ENCODE measurements at regions of chr9 and their contacts with region 1.

Region 1: DNA sequence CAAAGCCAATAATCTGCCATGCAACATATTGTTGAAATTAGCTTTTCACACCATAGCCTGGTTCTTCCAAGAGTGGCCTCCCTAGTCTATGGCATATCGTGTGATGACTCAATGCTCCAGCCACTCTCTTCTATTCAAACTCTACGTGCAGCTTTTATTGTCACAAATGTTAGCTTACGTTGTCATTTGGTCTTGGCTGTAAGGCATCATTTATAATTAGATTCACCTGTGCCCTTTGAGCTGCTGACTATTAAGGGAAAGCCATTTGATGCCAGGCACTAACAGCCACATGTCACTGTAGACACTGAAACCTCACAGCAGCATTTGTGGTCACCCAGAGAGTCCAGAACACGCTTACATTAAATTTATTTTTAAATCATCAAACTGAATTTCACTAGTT is 66.8 kb downstream of the APBA1 start:
- DNase-seq: no peak
- ATAC-seq: no peak
- H3K4me3 ChIP-seq: no peak overlapping the region
- H3K27ac ChIP-seq: no peak overlapping the region
- H3K4me1 ChIP-seq: no peaks in the 10 kb centered on the region
- H3K27me3 ChIP-seq: no peaks in the 10 kb centered on the region
- CTCF ChIP-seq: no peak
- POLR2A ChIP-seq: no peak
- RAD21 ChIP-seq: no peak

Region 2: DNA sequence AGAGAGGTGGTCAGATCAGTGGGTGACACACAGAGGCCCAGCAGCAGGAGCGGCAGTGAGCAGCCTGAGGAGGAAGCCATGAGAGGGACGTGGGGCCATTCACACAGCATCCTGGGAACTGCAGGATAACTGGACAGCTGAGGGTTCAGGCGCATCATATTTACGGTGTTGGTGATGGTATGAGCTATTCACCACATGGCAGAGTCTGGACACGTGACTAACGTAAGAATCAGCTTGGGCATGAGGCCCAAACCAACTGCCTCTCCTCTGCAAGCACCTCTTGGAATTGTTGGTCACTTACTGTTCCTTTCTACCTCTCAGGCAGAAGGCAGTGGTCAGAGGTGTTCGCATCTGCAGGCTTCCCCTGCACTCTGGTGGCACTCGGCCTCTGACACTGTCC is 139.3 kb before region 1 on chr9:
- CTCF ChIA-PET with region 1: no interaction called
- POLR2A ChIA-PET with region 1: no interaction called
- dilution Hi-C with region 1: no loop called
- in situ Hi-C with region 1: no loop called
- intact Hi-C with region 1: loop called (anchors 5 kb)
- DNase-seq: peak; percentile 84
- ATAC-seq: peak; percentile 67
- H3K4me3 ChIP-seq: no peak overlapping the region
- H3K27ac ChIP-seq: no peak overlapping the region
- H3K4me1 ChIP-seq: no peaks in the 10 kb centered on the region; the same call in 1 of the 2 replicates
- H3K27me3 ChIP-seq: no peaks in the 10 kb centered on the region
- CTCF ChIP-seq: no peak
- POLR2A ChIP-seq: no peak
- RAD21 ChIP-seq: no peak

Region 3: DNA sequence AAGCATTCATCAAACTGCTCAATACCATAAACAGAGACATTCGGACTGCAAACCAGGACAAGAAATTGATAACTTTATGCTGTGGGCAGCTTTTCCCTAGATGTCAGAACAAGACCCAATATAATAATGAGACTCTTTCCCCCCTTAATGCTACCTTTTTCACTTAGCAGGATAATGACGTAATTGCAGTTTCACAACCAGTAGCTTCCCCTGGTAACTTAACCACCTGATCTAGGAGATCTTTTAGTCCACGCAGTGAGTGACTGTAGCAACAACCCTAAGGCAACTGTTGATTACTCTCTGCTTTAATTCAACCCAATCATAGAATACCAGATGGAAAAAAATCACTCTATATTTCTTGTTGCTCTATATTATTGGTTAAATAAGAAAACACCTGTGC is 10.5 kb after region 1 on chr9:
- CTCF ChIA-PET with region 1: no interaction called
- POLR2A ChIA-PET with region 1: no interaction called
- dilution Hi-C with region 1: no loop called
- in situ Hi-C with region 1: no loop called
- intact Hi-C with region 1: no loop called
- DNase-seq: no peak
- ATAC-seq: no peak
- H3K4me3 ChIP-seq: no peak overlapping the region
- H3K27ac ChIP-seq: no peak overlapping the region
- H3K4me1 ChIP-seq: peaks cover 2% of the 10 kb centered on the region; the same call in 1 of the 2 replicates
- H3K27me3 ChIP-seq: no peaks in the 10 kb centered on the region
- CTCF ChIP-seq: no peak
- POLR2A ChIP-seq: no peak
- RAD21 ChIP-seq: no peak

Region 4: DNA sequence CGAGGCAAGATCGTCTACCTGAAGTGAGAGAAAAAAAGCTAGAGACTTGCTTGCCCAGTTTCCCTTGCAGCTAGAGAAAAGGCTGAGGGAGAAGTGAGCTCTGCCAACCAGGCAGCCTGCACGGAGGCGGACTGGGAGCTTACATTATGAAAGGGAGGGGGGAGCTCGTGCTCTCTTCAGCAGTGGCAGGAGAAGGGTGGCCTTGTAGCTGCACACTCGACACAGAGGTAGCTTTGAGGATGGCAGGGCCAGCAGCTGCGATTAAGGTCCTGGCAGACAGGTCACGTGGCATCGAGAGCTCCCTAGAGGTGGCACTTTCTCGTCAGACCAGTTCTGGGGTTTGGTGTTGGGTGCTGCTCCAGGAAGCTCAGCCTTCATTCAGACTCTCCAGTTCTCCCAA is 40.1 kb after region 1 on chr9:
- CTCF ChIA-PET with region 1: no interaction called
- POLR2A ChIA-PET with region 1: no interaction called
- dilution Hi-C with region 1: no loop called
- in situ Hi-C with region 1: no loop called
- intact Hi-C with region 1: no loop called
- DNase-seq: no peak
- ATAC-seq: no peak
- H3K4me3 ChIP-seq: no peak overlapping the region
- H3K27ac ChIP-seq: no peak overlapping the region
- H3K4me1 ChIP-seq: peaks cover 7% of the 10 kb centered on the region
- H3K27me3 ChIP-seq: no peaks in the 10 kb centered on the region
- CTCF ChIP-seq: no peak
- POLR2A ChIP-seq: no peak
- RAD21 ChIP-seq: no peak

Region 5: DNA sequence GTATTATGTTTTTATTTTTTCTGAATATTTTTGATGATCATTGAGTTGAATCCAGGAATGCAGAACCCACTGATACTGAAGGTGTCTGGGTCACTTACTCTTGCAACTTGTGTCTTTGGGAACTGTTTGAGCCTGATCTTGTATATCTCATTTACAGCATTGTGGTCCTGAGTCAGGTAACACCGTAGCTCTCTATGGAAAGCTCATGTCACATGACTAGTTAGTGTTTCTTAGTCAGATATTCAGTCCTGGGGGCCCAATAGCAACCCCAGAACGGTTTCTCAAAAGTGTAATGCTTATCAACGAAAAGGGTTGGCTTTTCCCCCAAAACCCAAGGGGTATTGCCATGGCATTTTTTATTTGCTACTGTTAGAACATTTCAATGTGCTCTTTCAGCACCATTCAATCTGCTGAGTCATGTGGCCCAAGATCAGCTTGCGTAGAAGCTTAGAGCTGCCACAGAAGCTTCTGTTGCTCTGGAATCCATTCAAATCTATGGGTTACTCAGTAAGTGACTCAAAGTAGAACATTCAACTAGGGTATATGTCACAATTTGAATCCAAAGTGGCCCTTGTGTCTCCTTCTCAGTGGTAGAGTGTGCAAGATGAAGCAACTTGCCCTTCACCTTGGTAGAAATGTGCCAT is 166.5 kb after region 1 on chr9:
- CTCF ChIA-PET with region 1: no interaction called
- POLR2A ChIA-PET with region 1: no interaction called
- dilution Hi-C with region 1: no loop called
- in situ Hi-C with region 1: no loop called
- intact Hi-C with region 1: no loop called
- DNase-seq: peak; percentile 90
- ATAC-seq: peak; percentile 63
- H3K4me3 ChIP-seq: no peak overlapping the region
- H3K27ac ChIP-seq: no peak overlapping the region
- H3K4me1 ChIP-seq: peaks cover 5% of the 10 kb centered on the region; the same call in 1 of the 2 replicates
- H3K27me3 ChIP-seq: no peaks in the 10 kb centered on the region
- CTCF ChIP-seq: no peak
- POLR2A ChIP-seq: no peak
- RAD21 ChIP-seq: no peak

Measured in IMR-90 (cell line).